ENCODE measurements at regions of chr12 and their contacts with region 1.

Region 1: DNA sequence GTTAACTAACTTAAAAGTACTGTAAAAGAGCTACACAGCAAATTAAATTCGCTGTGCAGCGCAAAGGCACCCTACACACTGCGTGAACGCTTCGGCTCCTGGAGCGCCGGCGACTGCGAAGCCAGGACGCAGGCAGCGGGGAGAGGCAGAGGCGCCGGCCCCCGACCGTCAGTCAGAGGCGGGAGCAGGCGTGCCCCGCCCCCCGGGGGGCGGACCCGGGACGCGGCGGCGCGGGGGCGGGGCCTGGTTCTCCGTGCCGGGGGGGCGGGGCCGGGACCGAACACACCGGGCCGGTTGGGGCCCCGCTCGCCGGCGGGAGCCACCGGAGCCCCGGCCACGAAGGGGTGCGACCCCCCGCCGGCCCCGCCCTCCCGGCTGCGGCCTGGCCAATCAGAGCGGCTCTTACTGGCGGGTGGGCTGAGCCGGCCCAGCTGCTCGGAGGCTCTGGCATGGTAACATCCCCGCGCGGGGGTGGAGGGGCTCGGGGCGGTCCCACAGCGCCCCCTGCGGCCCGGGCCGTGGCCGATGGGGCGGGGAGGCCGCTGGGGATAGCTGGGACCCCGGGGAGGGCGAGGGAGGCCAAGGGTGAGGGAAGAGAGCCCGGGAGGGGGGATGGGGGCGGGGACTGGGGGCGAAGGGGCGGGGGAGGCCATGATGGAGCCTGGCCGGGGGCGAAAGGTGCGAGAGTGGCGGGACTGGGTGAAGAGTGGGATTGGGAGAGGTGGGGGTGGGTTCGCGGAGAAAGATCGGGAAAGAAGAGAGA is at the start of gene PRPF40B:
- DNase-seq: peak; percentile 92
- ATAC-seq: peak; percentile 84
- H3K4me3 Mint-ChIP-seq: peak within 1 kb of the TSS; percentile 90
- H3K27ac Mint-ChIP-seq: peak within 1 kb of the TSS; percentile 92
- H3K4me1 Mint-ChIP-seq: peaks cover 35% of the 10 kb centered on the region
- H3K27me3 Mint-ChIP-seq: no peaks in the 10 kb centered on the region
- CTCF ChIP-seq: peak; percentile 47; the same call in 1 of the 2 replicates
- total RNA-seq, gene PRPF40B: 38.0 to 46.0 TPM (median 40.5 TPM) in 3 replicates

Region 2: DNA sequence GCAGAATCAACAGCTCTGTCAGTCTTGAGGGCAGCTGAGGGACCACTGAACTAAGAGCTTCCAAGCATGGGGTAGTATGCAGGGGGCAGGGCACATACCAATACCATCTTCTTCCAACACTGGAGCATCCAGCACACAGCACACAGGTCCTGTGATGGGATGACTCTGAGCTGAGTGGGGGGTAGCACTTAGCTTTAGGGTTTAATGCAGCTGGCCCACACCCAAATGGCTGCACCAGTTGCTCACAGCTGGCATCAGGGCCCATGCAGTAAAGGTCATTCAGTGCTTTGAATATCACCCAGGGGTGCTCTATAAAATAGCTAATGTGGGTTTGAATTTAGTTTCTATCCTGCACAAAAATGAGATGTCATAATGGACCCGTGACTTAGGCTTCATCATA is 19.6 kb before region 1 on chr12:
- CTCF ChIA-PET with region 1: interaction called, 13 read pairs
- POLR2A ChIA-PET with region 1: no interaction called
- DNase-seq: no peak
- ATAC-seq: no peak
- H3K4me3 Mint-ChIP-seq: no peak overlapping the region
- H3K27ac Mint-ChIP-seq: no peak overlapping the region
- H3K4me1 Mint-ChIP-seq: 0 out of 2 replicates have a peak, but pooled peaks cover 2% of the 10 kb centered on the region
- H3K27me3 Mint-ChIP-seq: peaks cover 19% of the 10 kb centered on the region
- CTCF ChIP-seq: no peak

Region 3: GRCh38 chr12:49609746-49610089 is 13.6 kb before region 1 on chr12:
- CTCF ChIA-PET with region 1: interaction called, 11 read pairs
- POLR2A ChIA-PET with region 1: interaction called, 3 read pairs
- DNase-seq: no peak
- ATAC-seq: peak; percentile 44
- H3K4me3 Mint-ChIP-seq: no peak overlapping the region
- H3K27ac Mint-ChIP-seq: no peak overlapping the region
- H3K4me1 Mint-ChIP-seq: 0 out of 2 replicates have a peak, but pooled peaks cover 2% of the 10 kb centered on the region
- H3K27me3 Mint-ChIP-seq: peaks cover 17% of the 10 kb centered on the region
- CTCF ChIP-seq: no peak

Region 4: GRCh38 chr12:49636979-49637755 is 13.8 kb after region 1 on chr12:
- CTCF ChIA-PET with region 1: interaction called, 74 read pairs
- POLR2A ChIA-PET with region 1: interaction called, 5 read pairs
- DNase-seq: peak; percentile 63
- ATAC-seq: peak; percentile 86
- H3K4me3 Mint-ChIP-seq: peak overlapping the region; percentile 15; the same call in 1 of the 2 replicates
- H3K27ac Mint-ChIP-seq: peak overlapping the region; percentile 96
- H3K4me1 Mint-ChIP-seq: peaks cover 21% of the 10 kb centered on the region
- H3K27me3 Mint-ChIP-seq: no peaks in the 10 kb centered on the region
- CTCF ChIP-seq: 0 out of 2 replicates have a peak, but pooled peaks have one; percentile 23

Region 5: DNA sequence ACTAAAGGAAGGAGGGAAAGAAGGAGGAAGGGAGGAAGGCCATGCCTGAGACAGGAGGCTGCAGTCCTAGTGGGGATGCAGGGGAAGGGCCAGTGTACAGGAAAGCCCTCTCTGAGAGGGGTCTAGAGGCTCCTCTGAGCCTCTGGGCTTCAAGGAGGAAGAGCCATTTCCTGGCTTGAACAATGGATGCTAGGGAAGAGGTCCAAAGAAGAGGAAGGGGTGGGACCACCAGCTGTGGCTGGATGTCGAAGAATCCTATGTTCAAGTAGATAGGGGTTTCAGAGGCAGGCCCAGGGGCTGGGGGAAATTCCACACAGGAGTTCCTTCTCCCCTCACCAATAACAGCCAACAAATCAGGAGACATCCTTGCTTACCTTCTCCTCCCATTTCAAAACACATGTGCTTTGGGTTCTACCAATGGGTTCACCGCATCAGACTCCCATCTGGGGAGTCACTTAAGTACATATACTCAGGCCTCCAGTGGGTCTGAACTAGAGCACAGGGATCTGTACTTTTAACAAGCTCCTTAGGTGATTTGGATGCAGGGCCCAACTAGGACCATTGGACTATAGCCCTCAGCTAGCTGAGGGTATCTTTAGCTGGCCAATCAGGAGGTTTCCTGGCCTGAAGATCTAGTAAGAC is 32.4 kb after region 1 on chr12:
- CTCF ChIA-PET with region 1: no interaction called
- POLR2A ChIA-PET with region 1: no interaction called
- DNase-seq: no peak
- ATAC-seq: no peak
- H3K4me3 Mint-ChIP-seq: no peak overlapping the region
- H3K27ac Mint-ChIP-seq: no peak overlapping the region
- H3K4me1 Mint-ChIP-seq: 0 out of 2 replicates have a peak, but pooled peaks cover 3% of the 10 kb centered on the region
- H3K27me3 Mint-ChIP-seq: no peaks in the 10 kb centered on the region
- CTCF ChIP-seq: no peak

Region 6: GRCh38 chr12:49673446-49674317 is 50.4 kb after region 1 on chr12:
- CTCF ChIA-PET with region 1: interaction called, 11 read pairs
- POLR2A ChIA-PET with region 1: no interaction called
- DNase-seq: peak; percentile 66
- ATAC-seq: peak; percentile 93
- H3K4me3 Mint-ChIP-seq: no peak overlapping the region
- H3K27ac Mint-ChIP-seq: peak overlapping the region; percentile 97
- H3K4me1 Mint-ChIP-seq: peaks cover 30% of the 10 kb centered on the region
- H3K27me3 Mint-ChIP-seq: no peaks in the 10 kb centered on the region
- CTCF ChIP-seq: no peak

Region 7: GRCh38 chr12:49730568-49731101 is 107.3 kb after region 1 on chr12:
- CTCF ChIA-PET with region 1: no interaction called
- POLR2A ChIA-PET with region 1: no interaction called
- DNase-seq: no peak
- ATAC-seq: no peak
- H3K4me3 Mint-ChIP-seq: no peak overlapping the region
- H3K27ac Mint-ChIP-seq: no peak overlapping the region
- H3K4me1 Mint-ChIP-seq: no peaks in the 10 kb centered on the region
- H3K27me3 Mint-ChIP-seq: peaks cover 19% of the 10 kb centered on the region
- CTCF ChIP-seq: no peak

Region 8: GRCh38 chr12:49763006-49763591 is 139.8 kb after region 1 on chr12:
- CTCF ChIA-PET with region 1: no interaction called
- POLR2A ChIA-PET with region 1: interaction called, 11 read pairs
- DNase-seq: peak; percentile 88
- ATAC-seq: peak; percentile 80
- H3K4me3 Mint-ChIP-seq: no peak overlapping the region
- H3K27ac Mint-ChIP-seq: peak overlapping the region; percentile 39; the same call in 1 of the 2 replicates
- H3K4me1 Mint-ChIP-seq: peaks cover 7% of the 10 kb centered on the region
- H3K27me3 Mint-ChIP-seq: no peaks in the 10 kb centered on the region
- CTCF ChIP-seq: peak; percentile 75

Measured in WTC11 (cell line).